ENCODE measurements at regions of chr18 and their contacts with region 1.

Region 1: GRCh38 chr18:60554967-60555366 is 182.4 kb upstream of the MC4R start:
- DNase-seq: no peak

Region 2: GRCh38 chr18:59988098-59988706 is 566.8 kb before region 1 on chr18:
- intact Hi-C with region 1: loop called (anchors 5 kb)
- DNase-seq: no peak

Region 3: GRCh38 chr18:60347526-60348045 is 207.4 kb before region 1 on chr18:
- intact Hi-C with region 1: no loop called
- DNase-seq: no peak

Region 4: DNA sequence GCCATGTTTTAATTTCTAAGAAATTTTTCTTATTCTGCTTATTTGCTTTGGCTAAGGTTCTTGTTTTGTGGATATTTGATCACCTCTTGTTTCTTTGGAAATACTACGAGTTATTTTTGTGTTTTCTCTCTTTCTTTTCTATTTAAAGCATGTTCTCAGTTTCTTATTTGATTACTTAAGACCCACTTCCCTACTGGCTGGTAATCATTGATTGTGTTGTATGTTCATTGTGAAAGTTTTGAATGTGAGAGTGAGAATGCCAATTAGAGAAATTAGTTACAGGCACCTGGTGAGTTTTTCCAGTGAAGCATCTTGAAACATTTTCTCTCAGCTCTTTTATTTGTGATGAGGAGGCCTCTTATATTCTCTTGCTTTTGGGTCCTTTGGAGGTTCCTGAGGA is 44.3 kb after region 1 on chr18:
- intact Hi-C with region 1: no loop called
- DNase-seq: no peak

Region 5: DNA sequence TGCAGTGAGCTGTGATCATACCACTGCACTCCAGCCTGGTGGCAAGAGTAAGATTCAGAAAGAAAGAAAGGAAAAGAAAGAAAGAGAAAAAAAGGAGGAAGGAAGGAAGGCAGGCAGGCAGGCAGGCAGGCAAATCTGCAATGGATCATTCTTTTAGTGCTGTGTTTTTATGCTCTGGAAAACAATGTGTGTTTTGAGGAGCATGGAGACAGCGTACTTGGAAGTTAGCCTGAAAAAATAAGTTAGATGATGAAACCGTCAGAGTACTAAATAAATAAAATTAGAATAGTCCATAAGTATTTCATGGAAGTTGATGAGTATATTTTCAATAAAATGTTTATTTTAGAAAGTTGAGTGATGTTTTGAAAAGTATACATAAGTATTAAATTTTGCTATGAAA is 411.9 kb after region 1 on chr18:
- intact Hi-C with region 1: no loop called
- DNase-seq: no peak